ENCODE measurements at regions of chr17 and their contacts with region 1.

Region 1: GRCh38 chr17:79045842-79046196 is 21.9 kb downstream of the C1QTNF1 start:
- DNase-seq: peak; percentile 55
- ATAC-seq: peak; percentile 87
- H3K4me3 Mint-ChIP-seq: no peak overlapping the region
- H3K27ac Mint-ChIP-seq: no peak overlapping the region
- H3K4me1 Mint-ChIP-seq: no peaks in the 10 kb centered on the region
- H3K27me3 Mint-ChIP-seq: peaks cover 31% of the 10 kb centered on the region
- CTCF ChIP-seq: peak; percentile 89

Region 2: GRCh38 chr17:78993241-78993956 is 52.4 kb before region 1 on chr17:
- CTCF ChIA-PET with region 1: no interaction called
- POLR2A ChIA-PET with region 1: no interaction called
- intact Hi-C with region 1: loop called (anchors 1 kb)
- DNase-seq: peak; percentile 40
- ATAC-seq: peak; percentile 77
- H3K4me3 Mint-ChIP-seq: no peak overlapping the region
- H3K27ac Mint-ChIP-seq: no peak overlapping the region
- H3K4me1 Mint-ChIP-seq: peaks cover 3% of the 10 kb centered on the region
- H3K27me3 Mint-ChIP-seq: no peaks in the 10 kb centered on the region
- CTCF ChIP-seq: peak; percentile 71

Region 3: DNA sequence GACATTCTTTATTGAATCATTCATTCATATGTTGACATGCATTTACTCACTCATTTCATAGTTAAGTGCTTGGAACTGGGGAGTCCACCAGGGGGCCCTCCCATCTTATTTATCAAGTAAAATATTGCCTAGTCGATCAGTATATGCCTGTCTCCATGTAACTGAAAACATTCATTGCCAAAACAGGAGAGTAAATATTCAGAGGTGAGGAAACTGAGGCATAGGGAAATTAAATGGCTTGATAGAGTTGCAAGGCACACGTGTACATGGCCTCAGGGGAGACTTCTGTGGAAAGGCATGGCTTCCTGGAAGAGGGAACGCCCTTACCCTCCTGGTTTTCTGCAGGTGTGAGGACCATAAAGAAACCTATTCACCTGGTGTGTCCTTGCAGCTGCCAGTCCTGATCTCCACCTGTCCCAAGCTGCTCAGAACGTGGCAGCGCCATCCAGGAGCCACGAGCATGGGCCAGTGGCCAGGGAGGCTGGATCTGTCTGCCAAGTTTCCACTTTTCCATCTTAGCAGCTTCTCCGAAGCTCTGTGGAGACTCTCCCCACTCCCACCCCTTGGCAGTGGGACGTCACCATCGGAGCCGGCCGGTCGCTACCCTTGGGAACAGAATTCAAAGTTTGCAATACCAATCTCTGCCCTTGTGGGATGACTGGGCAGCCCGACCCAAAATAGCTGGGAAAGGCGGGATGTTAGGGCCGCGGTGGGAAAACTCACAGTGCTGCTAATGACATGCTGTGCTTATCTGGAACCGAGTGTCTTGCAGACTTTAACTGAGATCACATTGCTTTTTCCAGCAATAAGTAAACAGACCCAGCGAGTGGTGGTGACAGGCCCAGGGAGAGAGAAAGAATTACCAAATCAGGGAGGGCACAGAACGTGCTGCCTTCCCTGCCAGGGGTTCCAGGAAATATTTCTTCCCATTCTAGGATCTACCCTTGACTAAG is 25.9 kb before region 1 on chr17:
- CTCF ChIA-PET with region 1: interaction called, 3 read pairs
- POLR2A ChIA-PET with region 1: no interaction called
- intact Hi-C with region 1: loop called (anchors 1 kb)
- DNase-seq: peak; percentile 8
- ATAC-seq: no peak
- H3K4me3 Mint-ChIP-seq: no peak overlapping the region
- H3K27ac Mint-ChIP-seq: no peak overlapping the region
- H3K4me1 Mint-ChIP-seq: peaks cover 10% of the 10 kb centered on the region
- H3K27me3 Mint-ChIP-seq: peaks cover 19% of the 10 kb centered on the region
- CTCF ChIP-seq: no peak

Region 4: GRCh38 chr17:79082311-79083190 is 36.7 kb after region 1 on chr17:
- CTCF ChIA-PET with region 1: interaction called, 3 read pairs
- POLR2A ChIA-PET with region 1: no interaction called
- intact Hi-C with region 1: loop called (anchors 1 kb)
- DNase-seq: peak; percentile 37
- ATAC-seq: peak; percentile 72
- H3K4me3 Mint-ChIP-seq: no peak overlapping the region
- H3K27ac Mint-ChIP-seq: no peak overlapping the region
- H3K4me1 Mint-ChIP-seq: peaks cover 3% of the 10 kb centered on the region
- H3K27me3 Mint-ChIP-seq: no peaks in the 10 kb centered on the region
- CTCF ChIP-seq: peak; percentile 40

Region 5: GRCh38 chr17:79160980-79161636 is 115.3 kb after region 1 on chr17:
- CTCF ChIA-PET with region 1: no interaction called
- POLR2A ChIA-PET with region 1: no interaction called
- intact Hi-C with region 1: no loop called
- DNase-seq: no peak
- ATAC-seq: peak; percentile 18
- H3K4me3 Mint-ChIP-seq: no peak overlapping the region
- H3K27ac Mint-ChIP-seq: no peak overlapping the region
- H3K4me1 Mint-ChIP-seq: no peaks in the 10 kb centered on the region
- H3K27me3 Mint-ChIP-seq: peaks cover 4% of the 10 kb centered on the region
- CTCF ChIP-seq: no peak